Right ventricle myocardium superior (tissue), 1 donor: ENCODE measurements at regions of chr18 and their contacts with region 1.

Region 1: DNA sequence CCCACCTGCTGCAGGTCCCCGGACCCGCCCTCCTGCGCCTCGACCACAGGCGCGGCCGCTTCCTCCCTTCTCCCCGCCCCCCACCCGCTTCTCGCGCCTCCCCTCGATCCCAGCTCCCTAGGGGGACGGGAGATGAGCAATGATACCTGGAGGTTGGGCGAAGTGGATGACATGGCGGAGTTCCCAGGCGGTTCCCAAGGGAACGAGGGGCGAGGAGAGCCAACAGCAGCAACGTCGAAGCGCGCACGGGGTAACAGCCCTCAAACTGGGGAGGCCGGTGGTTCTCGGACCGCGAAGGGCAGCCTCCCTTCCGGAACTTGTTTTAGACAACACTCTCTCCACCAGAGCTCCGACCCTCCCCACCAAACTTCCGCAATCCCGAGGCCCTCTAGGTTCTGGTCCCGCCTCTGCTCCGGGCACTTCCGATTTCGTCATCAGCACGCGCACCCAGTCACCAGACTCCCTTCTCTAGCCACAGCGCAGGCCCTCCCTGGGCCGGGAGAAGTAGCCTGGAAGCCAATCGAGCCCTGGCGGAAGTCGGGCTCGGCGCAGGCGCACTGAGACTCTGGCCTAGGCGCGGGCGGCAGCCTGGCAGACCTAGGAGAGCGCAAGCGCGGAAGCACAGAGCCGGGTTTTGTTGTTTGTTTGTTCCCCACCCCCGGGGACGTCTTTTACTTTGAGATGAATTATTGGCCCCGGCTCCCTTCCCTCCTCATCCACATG is at the start of gene VPS4B:
- DNase-seq: peak; percentile 100
- ATAC-seq: peak; percentile 98
- total RNA-seq, gene VPS4B: 15.9 TPM

Region 2: DNA sequence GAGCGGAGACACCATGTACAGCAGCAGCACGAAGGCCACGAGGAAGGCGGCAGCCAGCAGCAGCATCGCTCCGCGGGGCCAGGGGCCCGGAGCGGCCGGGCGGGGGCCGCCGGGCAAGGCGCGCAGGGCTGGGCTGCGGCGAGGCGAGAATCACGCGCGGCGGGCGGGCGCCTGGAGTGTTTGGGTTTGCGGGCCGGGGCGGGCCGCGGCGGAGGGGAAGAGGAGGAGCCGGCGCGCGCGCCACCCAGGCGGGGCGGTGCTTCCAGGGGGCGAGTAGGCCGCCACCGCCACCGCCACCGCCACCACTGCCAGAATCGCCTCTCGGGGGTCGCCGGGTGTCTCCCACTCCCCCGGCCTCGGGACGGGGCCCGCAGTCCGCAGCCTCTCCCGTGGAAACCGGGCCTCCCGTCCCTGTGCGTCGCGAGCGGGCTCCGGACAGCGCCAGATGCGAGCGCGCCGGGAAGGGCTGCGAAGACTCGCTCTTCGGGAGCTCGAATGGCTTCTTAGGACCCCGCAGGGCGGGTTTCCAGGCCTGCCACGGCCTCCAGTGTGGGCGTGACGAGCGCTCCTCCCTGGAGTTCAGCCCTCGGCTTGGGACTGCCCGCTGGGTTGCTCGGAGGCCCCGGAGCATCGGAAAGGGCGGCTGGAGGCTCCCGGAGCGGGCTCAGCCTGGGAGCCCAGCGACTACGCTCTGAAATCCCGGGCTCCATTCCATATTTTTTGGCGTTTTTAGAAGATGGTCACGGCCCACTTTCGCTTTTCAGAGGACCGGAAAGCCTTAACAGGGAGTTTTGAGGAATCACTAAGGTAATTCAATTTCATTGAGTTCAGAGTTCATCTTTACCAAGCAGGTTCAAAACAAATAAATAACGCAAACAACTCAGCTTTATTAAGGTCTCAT is 54.9 kb before region 1 on chr18 and contains the start of gene KDSR:
- intact Hi-C with region 1: loop called (anchors 5 kb)
- DNase-seq: peak; percentile 97
- ATAC-seq: peak; percentile 98
- total RNA-seq, gene KDSR: 29.2 TPM